ENCODE measurements at regions of chr20 and their contacts with region 1.

Region 1: GRCh38 chr20:43456809-43457639 is 672 bp upstream of the SRSF6 start:
- DNase-seq: peak; percentile 68 to 94 (median 87)
- ATAC-seq: peak; percentile 79
- H3K4me3 ChIP-seq: peak overlapping the region; percentile 97 to 100
- H3K4me3 Mint-ChIP-seq: peak overlapping the region; percentile 92
- H3K27ac ChIP-seq: peak overlapping the region; percentile 98 to 100
- H3K27ac Mint-ChIP-seq: peak overlapping the region; percentile 98
- H3K4me1 ChIP-seq: peaks cover 16% of the 10 kb centered on the region
- H3K4me1 Mint-ChIP-seq: peaks cover 36% of the 10 kb centered on the region
- H3K27me3 ChIP-seq: no peaks in the 10 kb centered on the region
- H3K27me3 Mint-ChIP-seq: peaks cover 8% of the 10 kb centered on the region
- CTCF ChIP-seq: no peak

Region 2: GRCh38 chr20:43514062-43514999 is 57.3 kb after region 1 on chr20:
- CTCF ChIA-PET with region 1: interaction called, 4 read pairs
- POLR2A ChIA-PET with region 1: interaction called, 10 read pairs
- intact Hi-C with region 1: loop called (anchors 1 kb)
- DNase-seq: peak; percentile 74 to 97 (median 89)
- ATAC-seq: peak; percentile 92
- H3K4me3 ChIP-seq: peak overlapping the region; percentile 65 to 72
- H3K4me3 Mint-ChIP-seq: peak overlapping the region; percentile 90
- H3K27ac ChIP-seq: peak overlapping the region; percentile 33 to 50
- H3K27ac Mint-ChIP-seq: peak overlapping the region; percentile 86
- H3K4me1 ChIP-seq: peaks cover 12% of the 10 kb centered on the region
- H3K4me1 Mint-ChIP-seq: peaks cover 20% of the 10 kb centered on the region
- H3K27me3 ChIP-seq: no peaks in the 10 kb centered on the region
- H3K27me3 Mint-ChIP-seq: peaks cover 3% of the 10 kb centered on the region
- CTCF ChIP-seq: no peak